Activated CD4-positive, alpha-beta memory T cell treated with anti-CD3 and anti-CD28 coated beads for 36 hours (primary cell): ENCODE measurements at regions of chr6 and their contacts with region 1.

Region 1: DNA sequence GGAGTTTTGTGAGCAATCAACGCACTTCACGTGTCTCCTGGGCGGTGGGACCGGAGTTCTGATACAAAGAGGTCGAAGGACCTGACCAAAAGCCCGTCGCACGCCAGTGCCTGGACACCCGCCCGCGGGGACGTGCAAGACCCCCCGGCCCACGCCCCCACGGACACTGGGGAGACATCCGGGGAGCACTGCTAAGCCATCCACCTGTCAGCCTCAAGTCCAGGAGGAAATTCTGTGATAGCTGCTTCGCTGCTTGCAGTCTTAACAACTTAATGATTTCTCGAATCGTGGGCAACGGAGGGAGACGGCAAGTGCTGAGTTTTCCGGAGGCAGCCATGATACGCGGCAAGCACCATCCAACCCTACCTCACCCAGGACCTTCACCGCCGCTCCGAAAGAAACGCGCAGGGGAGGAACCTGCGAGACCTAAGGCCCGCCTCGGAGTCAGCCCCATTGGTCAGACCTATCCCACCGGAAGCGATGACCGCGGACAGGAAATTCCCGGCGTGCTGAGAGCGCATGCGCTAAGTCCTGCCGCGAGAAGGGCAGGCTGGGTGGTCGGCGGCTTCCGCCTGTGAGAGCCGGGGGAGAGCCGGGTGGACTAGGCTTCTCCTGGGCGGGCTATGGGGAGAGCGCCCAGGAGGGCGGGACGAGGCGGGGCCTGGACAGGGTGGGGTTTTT is at the start of gene TFB1M:
- DNase-seq: peak; percentile 99
- H3K4me3 Mint-ChIP-seq: peak within 1 kb of the TSS; percentile 98
- H3K27ac Mint-ChIP-seq: peak within 1 kb of the TSS; percentile 96
- H3K4me1 Mint-ChIP-seq: peaks cover 38% of the 10 kb centered on the region
- H3K27me3 Mint-ChIP-seq: no peaks in the 10 kb centered on the region
- total RNA-seq, gene TFB1M: 45.1 to 48.5 TPM

Region 2: DNA sequence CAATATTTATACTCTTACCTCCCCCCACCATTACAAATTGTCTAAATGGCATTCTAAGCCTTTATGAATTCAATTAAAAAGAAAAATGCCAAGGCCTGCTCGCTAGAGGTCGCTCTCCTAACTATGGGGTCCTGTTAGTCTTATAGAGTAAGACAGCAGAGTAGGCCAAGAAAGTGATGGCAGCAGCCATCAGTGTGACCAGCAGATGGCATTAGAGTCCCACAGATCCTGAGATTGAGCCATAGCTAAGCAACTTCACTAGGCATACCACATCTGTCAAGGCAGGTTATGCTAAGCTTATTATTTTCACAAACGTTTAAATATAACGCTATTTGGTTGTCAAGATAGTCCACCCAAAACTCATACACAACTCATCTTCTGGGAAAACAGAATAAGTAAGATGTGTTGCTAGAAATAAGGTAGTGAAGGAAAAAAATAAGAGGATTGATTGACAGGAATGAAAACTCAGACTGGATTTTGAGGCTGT is 638.6 kb before region 1 on chr6:
- CTCF ChIA-PET with region 1: no interaction called
- POLR2A ChIA-PET with region 1: no interaction called
- intact Hi-C with region 1: loop called (anchors 10 kb)
- DNase-seq: peak; percentile 93
- H3K4me3 Mint-ChIP-seq: no peak overlapping the region
- H3K27ac Mint-ChIP-seq: no peak overlapping the region
- H3K4me1 Mint-ChIP-seq: no peaks in the 10 kb centered on the region
- H3K27me3 Mint-ChIP-seq: no peaks in the 10 kb centered on the region

Region 3: DNA sequence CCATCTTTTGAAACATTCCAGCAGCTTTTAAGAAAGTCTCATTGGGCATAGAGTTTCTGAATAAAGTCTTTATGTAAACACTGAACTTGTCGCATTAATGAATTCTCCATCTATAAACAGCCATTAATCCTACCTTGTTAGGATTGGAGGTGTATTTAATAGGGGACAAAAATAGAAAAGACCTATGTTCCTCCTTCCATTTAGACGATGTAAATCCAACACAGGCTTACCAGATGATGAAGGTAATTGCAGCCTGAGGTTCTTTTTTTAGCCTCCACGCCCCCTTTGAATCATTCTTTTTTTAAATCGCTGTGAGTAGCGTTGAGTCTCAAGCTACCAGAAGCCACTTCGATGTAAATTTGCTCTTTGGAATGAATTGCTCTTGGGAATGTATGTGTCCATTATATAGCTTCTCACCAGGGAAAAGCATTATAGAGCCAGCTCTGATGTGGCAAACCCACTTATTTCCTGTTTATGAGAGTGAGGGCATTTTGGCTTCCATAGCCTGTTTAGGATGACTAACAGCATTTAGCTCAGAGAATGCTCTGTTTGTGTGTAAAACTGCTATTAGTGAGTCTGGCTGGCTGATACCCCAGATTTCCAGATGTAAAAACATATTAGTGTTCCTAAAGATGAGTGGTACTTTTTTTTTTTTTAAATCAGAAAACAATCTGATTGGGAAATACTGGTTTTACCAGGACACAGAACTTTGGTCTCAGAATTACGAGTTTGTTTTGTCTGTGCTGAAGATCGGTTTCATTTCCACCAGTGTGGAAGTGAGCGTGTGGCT is 125.3 kb before region 1 on chr6:
- CTCF ChIA-PET with region 1: interaction called, 8 read pairs
- POLR2A ChIA-PET with region 1: interaction called, 8 read pairs
- intact Hi-C with region 1: loop called (anchors 1 kb)
- DNase-seq: no peak
- H3K4me3 Mint-ChIP-seq: peak overlapping the region; percentile 37
- H3K27ac Mint-ChIP-seq: peak overlapping the region; percentile 57
- H3K4me1 Mint-ChIP-seq: peaks cover 41% of the 10 kb centered on the region
- H3K27me3 Mint-ChIP-seq: no peaks in the 10 kb centered on the region

Region 4: GRCh38 chr6:155418017-155418761 is 104.0 kb after region 1 on chr6:
- CTCF ChIA-PET with region 1: interaction called, 3 read pairs
- POLR2A ChIA-PET with region 1: interaction called, 12 read pairs
- intact Hi-C with region 1: loop called (anchors 1 kb)
- DNase-seq: peak; percentile 87
- H3K4me3 Mint-ChIP-seq: peak overlapping the region; percentile 38
- H3K27ac Mint-ChIP-seq: peak overlapping the region; percentile 98
- H3K4me1 Mint-ChIP-seq: peaks cover 55% of the 10 kb centered on the region
- H3K27me3 Mint-ChIP-seq: no peaks in the 10 kb centered on the region

Region 5: GRCh38 chr6:155747491-155747890 is 433.3 kb after region 1 on chr6:
- CTCF ChIA-PET with region 1: no interaction called
- POLR2A ChIA-PET with region 1: no interaction called
- intact Hi-C with region 1: no loop called
- DNase-seq: no peak
- H3K4me3 Mint-ChIP-seq: no peak overlapping the region
- H3K27ac Mint-ChIP-seq: no peak overlapping the region
- H3K4me1 Mint-ChIP-seq: no peaks in the 10 kb centered on the region
- H3K27me3 Mint-ChIP-seq: peaks cover 4% of the 10 kb centered on the region

Region 6: DNA sequence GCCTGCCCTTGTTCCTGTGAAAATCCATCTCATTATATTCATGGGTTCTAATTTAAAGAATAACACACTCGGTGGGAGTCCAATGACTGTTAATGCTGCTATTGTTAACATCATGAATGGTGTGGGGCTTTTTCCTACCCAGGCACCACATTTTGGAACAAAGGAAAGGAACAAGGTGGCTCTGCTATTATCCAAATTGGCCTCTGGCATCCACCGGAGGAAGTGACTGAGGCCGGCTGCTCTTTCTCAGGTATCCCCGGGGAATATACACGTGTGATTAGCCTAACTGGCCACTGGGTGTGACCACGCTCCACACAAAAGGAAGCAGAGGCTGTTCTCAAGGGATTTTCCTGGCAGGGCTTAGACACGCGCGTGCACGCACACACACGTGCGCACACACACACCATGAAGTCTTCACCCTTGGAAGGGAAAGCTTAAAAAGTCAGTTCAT is 861.8 kb after region 1 on chr6:
- CTCF ChIA-PET with region 1: no interaction called
- POLR2A ChIA-PET with region 1: no interaction called
- intact Hi-C with region 1: loop called (anchors 10 kb)
- DNase-seq: no peak
- H3K4me3 Mint-ChIP-seq: no peak overlapping the region
- H3K27ac Mint-ChIP-seq: peak overlapping the region; percentile 35
- H3K4me1 Mint-ChIP-seq: peaks cover 24% of the 10 kb centered on the region
- H3K27me3 Mint-ChIP-seq: no peaks in the 10 kb centered on the region

Region 7: GRCh38 chr6:156917213-156917612 is 1603.0 kb after region 1 on chr6:
- CTCF ChIA-PET with region 1: no interaction called
- POLR2A ChIA-PET with region 1: no interaction called
- intact Hi-C with region 1: loop called (anchors 5 kb)
- DNase-seq: no peak
- H3K4me3 Mint-ChIP-seq: no peak overlapping the region
- H3K27ac Mint-ChIP-seq: no peak overlapping the region
- H3K4me1 Mint-ChIP-seq: peaks cover 49% of the 10 kb centered on the region
- H3K27me3 Mint-ChIP-seq: no peaks in the 10 kb centered on the region